CD14-positive monocyte (primary cell): ENCODE measurements at regions of chr2 and their contacts with region 1.

Region 1: GRCh38 chr2:11778923-11779757 is 32.7 kb downstream of the LPIN1 start:
- DNase-seq: peak; percentile 60 to 73 (median 64)
- H3K4me3 ChIP-seq: peak overlapping the region in 1 of 3 experiments; percentile 42
- H3K4me3 Mint-ChIP-seq: peak overlapping the region; percentile 61 to 74
- H3K27ac ChIP-seq: no peak overlapping the region
- H3K27ac Mint-ChIP-seq: no peak overlapping the region
- H3K4me1 ChIP-seq: peaks cover 16 to 20% of the 10 kb centered on the region in 2 donors
- H3K4me1 Mint-ChIP-seq: peaks cover 23% of the 10 kb centered on the region
- H3K27me3 ChIP-seq: no peaks in the 10 kb centered on the region
- H3K27me3 Mint-ChIP-seq: peaks cover 0 to 3% (median 1%) of the 10 kb centered on the region in 3 donors
- CTCF ChIP-seq: peak; percentile 99

Region 2: DNA sequence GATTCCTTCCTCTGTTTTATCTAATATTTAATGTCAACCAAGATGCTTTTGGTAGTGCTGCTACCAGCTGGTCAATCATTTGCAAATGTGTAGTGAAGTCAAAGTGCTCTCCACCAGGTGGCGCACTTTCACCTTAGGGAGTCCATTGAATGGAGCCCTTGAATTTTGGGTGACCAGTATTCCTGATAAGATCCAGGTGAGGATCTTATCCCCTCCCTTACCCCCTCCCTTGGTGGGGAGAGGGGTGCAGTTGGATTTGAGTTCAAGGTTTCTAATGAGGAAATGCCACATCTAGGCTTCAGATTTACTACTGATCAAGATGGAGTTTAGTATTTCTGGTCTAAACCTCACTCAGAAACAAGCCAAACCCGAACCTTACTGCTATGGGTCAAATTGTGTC is 301.1 kb before region 1 on chr2:
- intact Hi-C with region 1: loop called in 1 of 2 experiments (anchors 5 kb)
- DNase-seq: peak; percentile 61 to 84 (median 75)
- H3K4me3 ChIP-seq: no peak overlapping the region
- H3K4me3 Mint-ChIP-seq: no peak overlapping the region
- H3K27ac ChIP-seq: no peak overlapping the region
- H3K27ac Mint-ChIP-seq: no peak overlapping the region
- H3K4me1 ChIP-seq: peaks cover 0 to under 1% of the 10 kb centered on the region in 2 donors
- H3K4me1 Mint-ChIP-seq: peaks cover under 1% of the 10 kb centered on the region
- H3K27me3 ChIP-seq: peaks cover 37 to 41% of the 10 kb centered on the region in 2 donors
- H3K27me3 Mint-ChIP-seq: peaks cover 32 to 45% (median 41%) of the 10 kb centered on the region in 3 donors
- CTCF ChIP-seq: peak; percentile 93

Region 3: DNA sequence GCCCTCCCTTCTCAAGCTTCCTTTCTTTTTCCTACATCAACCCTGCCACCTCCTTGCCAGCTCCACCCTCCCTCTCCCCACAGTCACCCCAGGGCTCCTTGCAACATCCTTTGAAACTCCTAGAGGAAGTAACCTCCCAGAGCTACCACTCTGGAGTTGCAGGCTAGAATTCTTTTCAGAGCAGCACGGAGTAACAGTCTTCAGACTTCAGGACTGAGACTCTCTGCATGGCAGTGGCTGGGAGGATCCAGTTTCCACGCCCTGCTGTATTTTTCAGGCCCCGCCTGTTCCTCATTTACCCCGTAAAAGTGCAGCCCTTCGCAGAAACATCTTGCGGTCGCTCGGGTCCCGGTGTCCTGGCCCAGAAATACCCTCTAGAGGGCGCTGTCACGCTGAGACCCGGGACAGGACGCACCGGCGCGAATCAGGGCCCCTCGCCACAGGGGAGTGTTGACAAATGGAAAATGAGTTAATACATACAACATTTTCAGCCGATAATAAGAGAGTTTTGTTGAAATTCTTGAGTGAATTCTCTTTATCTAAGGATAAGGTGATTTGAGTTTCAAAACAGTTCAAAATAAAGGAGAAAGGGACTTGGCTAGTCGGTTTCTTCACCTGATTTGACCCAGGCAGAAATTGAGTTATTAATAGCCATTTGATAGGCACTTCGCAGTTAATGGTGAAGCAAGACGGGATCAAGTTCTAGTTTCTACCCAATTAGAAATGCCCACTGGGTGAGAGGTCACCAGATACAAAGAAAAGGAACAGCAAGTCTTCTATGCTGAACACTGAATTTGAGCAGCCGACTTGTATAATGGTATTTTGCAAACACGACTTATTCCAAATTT is 90.7 kb before region 1 on chr2:
- intact Hi-C with region 1: loop called (anchors 2 to 5 kb)
- DNase-seq: peak; percentile 76 to 86 (median 79)
- H3K4me3 ChIP-seq: peak overlapping the region; percentile 1 to 63 (median 21)
- H3K4me3 Mint-ChIP-seq: peak overlapping the region; percentile 75 to 89
- H3K27ac ChIP-seq: peak overlapping the region in 1 of 2 donors; percentile 45
- H3K27ac Mint-ChIP-seq: peak overlapping the region; percentile 76 to 95 (median 88)
- H3K4me1 ChIP-seq: peaks cover 29 to 34% of the 10 kb centered on the region in 2 donors
- H3K4me1 Mint-ChIP-seq: peaks cover 42% of the 10 kb centered on the region
- H3K27me3 ChIP-seq: no peaks in the 10 kb centered on the region
- H3K27me3 Mint-ChIP-seq: peaks cover 13 to 17% (median 16%) of the 10 kb centered on the region in 3 donors
- CTCF ChIP-seq: peak; percentile 93

Region 4: GRCh38 chr2:11738589-11739436 is 40.3 kb before region 1 on chr2:
- intact Hi-C with region 1: loop called (anchors 5 kb)
- DNase-seq: peak; percentile 61 to 89 (median 73)
- H3K4me3 ChIP-seq: no peak overlapping the region
- H3K4me3 Mint-ChIP-seq: no peak overlapping the region
- H3K27ac ChIP-seq: no peak overlapping the region
- H3K27ac Mint-ChIP-seq: peak overlapping the region in 3 of 7 donors; percentile 35 to 63 (median 42)
- H3K4me1 ChIP-seq: peaks cover 7 to 18% of the 10 kb centered on the region in 2 donors
- H3K4me1 Mint-ChIP-seq: peaks cover 19% of the 10 kb centered on the region
- H3K27me3 ChIP-seq: no peaks in the 10 kb centered on the region
- H3K27me3 Mint-ChIP-seq: peaks cover 1 to 6% (median 2%) of the 10 kb centered on the region in 3 donors
- CTCF ChIP-seq: peak; percentile 56

Region 5: GRCh38 chr2:11743846-11744553 is 35.1 kb before region 1 on chr2:
- intact Hi-C with region 1: loop called (anchors 5 kb)
- DNase-seq: peak; percentile 96 to 100 (median 99)
- H3K4me3 ChIP-seq: peak overlapping the region in 1 of 3 experiments; percentile 28
- H3K4me3 Mint-ChIP-seq: peak overlapping the region; percentile 54 to 68
- H3K27ac ChIP-seq: peak overlapping the region; percentile 16 to 70
- H3K27ac Mint-ChIP-seq: peak overlapping the region; percentile 81 to 93 (median 86)
- H3K4me1 ChIP-seq: peaks cover 50 to 59% of the 10 kb centered on the region in 2 donors
- H3K4me1 Mint-ChIP-seq: peaks cover 56% of the 10 kb centered on the region
- H3K27me3 ChIP-seq: no peaks in the 10 kb centered on the region
- H3K27me3 Mint-ChIP-seq: peaks cover 7 to 18% (median 15%) of the 10 kb centered on the region in 3 donors
- CTCF ChIP-seq: no peak